GM12878 (cell line): ENCODE measurements at regions of chr18 and their contacts with region 1.

Region 1: GRCh38 chr18:50819728-50820378 is at the start of gene MRO:
- DNase-seq: no peak
- ATAC-seq: peak; percentile 99
- H3K4me3 ChIP-seq: peak within 1 kb of the TSS; percentile 56
- H3K27ac ChIP-seq: no peak within 1 kb of the TSS
- H3K4me1 ChIP-seq: peaks cover 6% of the 10 kb centered on the region; the same call in 1 of the 2 replicates
- H3K27me3 ChIP-seq: no peaks in the 10 kb centered on the region
- CTCF ChIP-seq: peak; percentile 95 to 97 (median 96)
- EP300 ChIP-seq: no peak
- POLR2A ChIP-seq: no peak
- RAD21 ChIP-seq: peak; percentile 97
- polyA plus RNA-seq, gene MRO: 0.11 TPM in 1 of 2 experiments, not detected in the other

Region 2: DNA sequence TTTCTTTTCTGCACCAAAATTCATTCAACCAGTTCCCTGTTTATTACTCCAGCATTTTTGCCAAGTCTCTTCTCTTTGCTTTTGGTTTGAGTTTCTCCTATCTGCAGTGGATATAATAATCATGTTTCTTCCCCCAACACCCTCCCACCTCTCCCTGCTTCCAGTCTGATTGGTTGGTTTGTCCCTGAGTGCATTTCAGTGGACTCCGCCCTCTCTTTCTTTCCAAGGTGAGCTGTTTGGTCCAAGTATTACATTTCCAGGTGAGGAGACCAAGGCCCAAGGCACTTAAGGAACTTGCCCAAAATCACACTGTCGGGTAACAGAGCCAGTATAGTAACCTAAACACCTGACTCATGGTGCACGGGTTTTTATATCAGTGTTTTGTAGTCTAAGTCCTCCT is 17.7 kb before region 1 on chr18:
- CTCF ChIA-PET with region 1: no interaction called
- POLR2A ChIA-PET with region 1: no interaction called
- RAD21 ChIA-PET with region 1: no interaction called
- SMC1A ChIA-PET with region 1: no interaction called
- in situ Hi-C with region 1: no loop called
- intact Hi-C with region 1: no loop called
- DNase-seq: no peak
- ATAC-seq: no peak
- H3K4me3 ChIP-seq: no peak overlapping the region
- H3K27ac ChIP-seq: no peak overlapping the region
- H3K4me1 ChIP-seq: peaks cover 5% of the 10 kb centered on the region
- H3K27me3 ChIP-seq: no peaks in the 10 kb centered on the region; a peak in 1 of 4 replicates
- CTCF ChIP-seq: no peak
- EP300 ChIP-seq: no peak
- POLR2A ChIP-seq: no peak
- RAD21 ChIP-seq: no peak

Region 3: DNA sequence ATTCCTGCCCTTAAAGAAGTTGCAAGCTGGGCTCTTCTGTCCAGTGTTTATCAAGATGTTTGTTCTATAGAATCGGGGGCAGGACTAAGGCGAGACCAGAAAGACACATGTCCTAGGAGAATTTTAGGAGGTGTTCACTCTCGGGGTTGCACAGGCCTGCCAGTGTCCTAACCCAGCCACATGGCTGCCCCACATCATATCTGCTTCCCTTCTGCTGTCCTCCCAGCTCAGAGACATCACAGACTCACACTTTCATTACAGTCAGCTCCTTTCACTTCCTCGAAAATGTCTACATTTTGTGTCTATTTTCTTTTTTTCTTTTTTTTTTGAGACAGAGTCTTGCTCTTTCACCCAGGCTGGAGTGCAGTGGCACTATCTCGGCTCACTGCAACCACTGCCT is 10.7 kb after region 1 on chr18:
- CTCF ChIA-PET with region 1: interaction called, 31 read pairs
- POLR2A ChIA-PET with region 1: interaction called, 6 read pairs
- RAD21 ChIA-PET with region 1: interaction called, 6 read pairs
- SMC1A ChIA-PET with region 1: interaction called, 5 read pairs
- in situ Hi-C with region 1: no loop called
- intact Hi-C with region 1: no loop called
- DNase-seq: no peak
- ATAC-seq: peak; percentile 89
- H3K4me3 ChIP-seq: no peak overlapping the region
- H3K27ac ChIP-seq: peak overlapping the region; percentile 40; the same call in 1 of the 2 replicates
- H3K4me1 ChIP-seq: peaks cover 21% of the 10 kb centered on the region
- H3K27me3 ChIP-seq: no peaks in the 10 kb centered on the region
- CTCF ChIP-seq: no peak
- EP300 ChIP-seq: no peak
- POLR2A ChIP-seq: 0 out of 2 replicates have a peak, but pooled peaks have one; percentile 25
- RAD21 ChIP-seq: no peak

Region 4: GRCh38 chr18:50871846-50872245 is 52.0 kb after region 1 on chr18:
- CTCF ChIA-PET with region 1: interaction called, 46 read pairs
- POLR2A ChIA-PET with region 1: no interaction called
- RAD21 ChIA-PET with region 1: interaction called, 20 read pairs
- SMC1A ChIA-PET with region 1: interaction called, 24 read pairs
- in situ Hi-C with region 1: no loop called
- intact Hi-C with region 1: loop called (anchors 2 kb)
- DNase-seq: no peak
- ATAC-seq: no peak
- H3K4me3 ChIP-seq: no peak overlapping the region
- H3K27ac ChIP-seq: no peak overlapping the region
- H3K4me1 ChIP-seq: no peaks in the 10 kb centered on the region
- H3K27me3 ChIP-seq: no peaks in the 10 kb centered on the region
- CTCF ChIP-seq: no peak
- EP300 ChIP-seq: no peak
- POLR2A ChIP-seq: no peak
- RAD21 ChIP-seq: no peak

Region 5: DNA sequence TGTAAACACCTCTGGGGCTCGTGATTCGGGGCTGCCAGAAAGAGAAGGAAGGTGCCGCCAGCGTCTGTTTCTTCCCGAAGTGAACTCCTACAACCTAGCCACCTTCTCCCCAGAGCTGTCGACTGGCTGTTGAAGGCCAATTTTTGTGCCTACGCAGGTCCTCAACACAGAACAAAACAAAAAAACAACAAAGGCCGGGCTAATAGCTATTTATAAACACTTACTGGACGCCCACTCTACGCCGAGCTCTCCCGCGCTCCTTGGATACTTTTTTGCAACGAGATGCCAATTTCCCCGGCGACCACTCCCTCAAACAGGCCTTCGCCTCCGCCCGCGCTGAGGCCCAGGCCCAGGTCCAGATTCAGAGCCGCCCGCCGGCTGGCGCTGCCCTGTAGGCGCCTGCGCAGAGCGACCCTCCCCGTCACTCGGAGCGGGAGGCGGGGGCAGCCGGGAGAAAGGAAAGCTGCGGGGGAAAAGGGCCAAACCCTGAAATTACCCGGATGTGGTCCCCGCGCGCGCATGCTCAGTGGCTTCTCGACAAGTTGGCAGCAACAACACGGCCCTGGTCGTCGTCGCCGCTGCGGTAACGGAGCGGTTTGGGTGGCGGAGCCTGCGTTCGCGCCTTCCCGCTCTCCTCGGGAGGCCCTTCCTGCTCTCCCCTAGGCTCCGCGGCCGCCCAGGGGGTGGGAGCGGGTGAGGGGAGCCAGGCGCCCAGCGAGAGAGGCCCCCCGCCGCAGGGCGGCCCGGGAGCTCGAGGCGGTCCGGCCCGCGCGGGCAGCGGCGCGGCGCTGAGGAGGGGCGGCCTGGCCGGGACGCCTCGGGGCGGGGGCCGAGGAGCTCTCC is 210.1 kb after region 1 on chr18 and contains the start of gene SMAD4:
- CTCF ChIA-PET with region 1: interaction called, 21 read pairs
- POLR2A ChIA-PET with region 1: interaction called, 3 read pairs
- RAD21 ChIA-PET with region 1: interaction called, 5 read pairs
- SMC1A ChIA-PET with region 1: interaction called, 4 read pairs
- in situ Hi-C with region 1: no loop called
- intact Hi-C with region 1: no loop called
- DNase-seq: peak; percentile 71
- ATAC-seq: peak; percentile 90
- H3K4me3 ChIP-seq: peak within 1 kb of the TSS; percentile 88
- H3K27ac ChIP-seq: peak within 1 kb of the TSS; percentile 77
- H3K4me1 ChIP-seq: peaks cover 6% of the 10 kb centered on the region
- H3K27me3 ChIP-seq: no peaks in the 10 kb centered on the region
- CTCF ChIP-seq: 0 out of 6 replicates have a peak, but pooled peaks of 1 of the 3 experiments have one; percentile 4
- EP300 ChIP-seq: no peak
- POLR2A ChIP-seq: peak; percentile 97
- RAD21 ChIP-seq: no peak
- polyA plus RNA-seq, gene SMAD4: 9.6 to 13.3 TPM

Region 6: DNA sequence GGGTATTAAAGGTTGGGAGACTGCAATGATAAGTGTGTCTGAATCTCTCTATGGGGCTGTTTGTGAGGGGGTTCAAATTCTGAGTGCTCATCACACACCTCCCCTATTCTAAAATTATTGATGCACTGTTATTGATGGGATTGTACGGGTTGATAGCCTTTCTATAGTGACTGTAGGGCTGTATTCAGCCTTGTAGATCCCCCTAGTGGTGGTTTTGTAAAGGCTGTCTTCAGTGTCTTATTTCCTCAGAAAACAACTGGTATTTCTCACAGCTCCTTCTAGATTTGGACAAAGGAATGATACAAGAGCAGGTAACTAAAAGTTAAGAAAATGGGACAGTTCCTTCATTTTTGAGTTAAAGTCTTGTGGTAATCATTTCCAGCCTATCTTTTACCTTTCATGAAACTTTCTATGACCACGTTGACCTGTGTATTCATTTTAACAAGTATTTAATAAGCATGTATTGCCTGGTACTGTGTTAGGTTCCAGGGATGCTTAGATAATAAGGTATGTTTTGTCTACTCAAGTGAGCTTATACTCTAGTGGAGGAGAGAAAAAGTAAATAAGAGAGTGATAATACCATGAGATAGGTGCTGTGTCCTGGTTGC is 231.4 kb after region 1 on chr18:
- CTCF ChIA-PET with region 1: interaction called, 41 read pairs
- POLR2A ChIA-PET with region 1: no interaction called
- RAD21 ChIA-PET with region 1: interaction called, 7 read pairs
- SMC1A ChIA-PET with region 1: interaction called, 16 read pairs
- in situ Hi-C with region 1: loop called (anchors 10 kb)
- intact Hi-C with region 1: loop called (anchors 1 kb)
- DNase-seq: no peak
- ATAC-seq: peak; percentile 98
- H3K4me3 ChIP-seq: no peak overlapping the region
- H3K27ac ChIP-seq: no peak overlapping the region
- H3K4me1 ChIP-seq: peaks cover 6% of the 10 kb centered on the region; the same call in 1 of the 2 replicates
- H3K27me3 ChIP-seq: no peaks in the 10 kb centered on the region
- CTCF ChIP-seq: peak; percentile 78 to 83 (median 79)
- EP300 ChIP-seq: no peak
- POLR2A ChIP-seq: no peak
- RAD21 ChIP-seq: peak; percentile 79